MCF 10A (cell line): ENCODE measurements at regions of chr5 and their contacts with region 1.

Region 1: DNA sequence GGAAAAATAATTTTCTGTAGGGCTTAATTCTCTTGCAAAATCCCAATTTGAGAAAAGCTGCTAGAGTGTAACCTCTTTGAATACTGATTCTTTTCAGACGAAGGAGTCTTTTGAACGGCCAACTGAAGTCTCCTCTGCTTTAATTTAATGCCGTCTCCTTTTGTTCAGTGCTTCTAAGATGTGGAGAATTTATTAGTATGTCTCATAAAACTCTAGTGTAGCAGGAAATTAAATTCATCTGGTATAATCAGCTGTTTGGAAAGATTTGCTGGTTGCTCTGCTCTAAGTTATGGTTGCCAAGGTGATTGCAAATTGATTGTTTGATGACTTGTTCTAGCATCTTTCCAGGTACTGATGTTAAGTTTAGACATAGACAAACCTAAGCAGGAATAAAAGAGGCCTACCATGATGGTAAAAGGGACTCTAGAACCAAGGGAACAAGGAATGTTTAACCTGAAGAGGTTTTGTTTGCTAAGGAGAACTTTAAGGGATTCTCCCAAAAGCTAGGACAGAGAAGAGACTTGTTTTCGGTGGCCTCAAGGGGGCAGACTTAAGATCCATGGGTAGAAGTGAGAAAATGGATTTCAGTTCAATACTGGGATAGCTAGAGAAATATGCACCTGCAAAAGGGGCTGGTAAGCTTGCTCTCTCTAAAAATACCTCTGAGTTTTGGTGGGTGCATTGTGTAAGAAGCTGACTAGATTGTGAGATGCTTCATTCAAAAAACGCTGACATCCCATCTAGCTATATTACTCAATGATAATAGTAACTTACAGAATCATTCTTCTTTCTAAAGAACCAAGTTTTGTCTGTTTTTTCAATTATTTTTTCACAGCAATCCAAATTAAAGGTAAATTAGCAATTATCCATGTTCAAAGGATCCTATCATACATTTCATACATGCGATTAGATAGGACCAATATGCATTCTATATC is 5.7 kb upstream of the ADRB2 start:
- DNase-seq: peak; percentile 63
- H3K4me3 Mint-ChIP-seq: no peak overlapping the region
- H3K27ac Mint-ChIP-seq: no peak overlapping the region
- H3K4me1 Mint-ChIP-seq: peaks cover 5% of the 10 kb centered on the region
- H3K27me3 Mint-ChIP-seq: no peaks in the 10 kb centered on the region
- CTCF ChIP-seq: peak; percentile 84

Region 2: GRCh38 chr5:148179234-148179824 is 641.4 kb before region 1 on chr5:
- CTCF ChIA-PET with region 1: no interaction called
- POLR2A ChIA-PET with region 1: no interaction called
- intact Hi-C with region 1: no loop called
- DNase-seq: peak; percentile 84
- H3K4me3 Mint-ChIP-seq: no peak overlapping the region
- H3K27ac Mint-ChIP-seq: no peak overlapping the region
- H3K4me1 Mint-ChIP-seq: no peaks in the 10 kb centered on the region
- H3K27me3 Mint-ChIP-seq: peaks cover 7% of the 10 kb centered on the region
- CTCF ChIP-seq: peak; percentile 94

Region 3: DNA sequence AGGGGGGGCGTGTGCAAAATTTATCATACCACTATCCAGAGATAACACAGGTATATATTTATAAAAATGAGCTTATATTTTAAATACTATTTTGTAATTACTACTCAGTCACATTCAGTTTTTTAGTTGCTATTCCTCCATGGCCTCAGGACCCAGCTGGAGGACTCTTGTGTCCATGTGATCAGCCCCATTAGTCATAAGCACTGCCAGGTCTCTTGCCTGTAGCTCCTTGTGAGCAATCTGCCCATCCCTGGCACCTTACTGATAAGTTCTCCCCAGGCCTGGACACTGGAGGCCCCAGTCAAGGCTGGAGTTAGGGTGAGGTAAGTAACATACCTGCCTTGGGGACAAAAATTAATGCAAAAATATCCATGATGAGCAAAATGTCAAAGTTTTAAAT is 23.8 kb before region 1 on chr5:
- CTCF ChIA-PET with region 1: interaction called, 12 read pairs
- POLR2A ChIA-PET with region 1: interaction called, 4 read pairs
- intact Hi-C with region 1: no loop called
- DNase-seq: peak; percentile 55
- H3K4me3 Mint-ChIP-seq: no peak overlapping the region
- H3K27ac Mint-ChIP-seq: no peak overlapping the region
- H3K4me1 Mint-ChIP-seq: peaks cover 28% of the 10 kb centered on the region
- H3K27me3 Mint-ChIP-seq: no peaks in the 10 kb centered on the region
- CTCF ChIP-seq: no peak

Region 4: DNA sequence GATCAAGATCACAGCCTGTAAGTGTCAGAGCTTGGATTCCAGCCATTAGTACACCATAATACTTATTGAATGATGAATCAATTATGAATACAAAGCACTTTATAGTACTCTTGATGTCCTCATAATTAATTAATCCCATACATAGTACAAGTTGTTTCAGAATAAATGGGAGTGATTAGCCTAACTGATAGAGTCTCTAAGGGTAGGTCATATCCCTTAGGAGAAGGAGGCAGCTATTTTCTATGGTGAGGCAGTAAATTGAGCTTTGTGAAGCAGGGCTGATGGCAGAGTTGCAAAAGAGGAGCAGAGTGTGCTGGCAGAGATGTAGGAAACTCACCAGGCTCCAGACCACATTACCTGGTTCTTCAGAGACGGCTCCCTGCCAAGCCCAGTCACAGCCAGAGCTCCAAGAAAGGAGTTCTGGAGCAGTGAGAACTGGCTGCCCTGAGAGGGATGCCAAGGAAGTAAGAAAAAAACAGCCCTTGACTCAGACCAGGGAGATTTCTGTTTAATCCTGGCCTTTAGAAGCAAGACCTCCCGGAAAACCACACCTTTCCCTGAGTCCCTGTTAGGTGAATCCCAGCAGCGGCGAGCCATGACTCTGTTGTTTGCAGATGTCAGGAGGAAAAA is 129.2 kb after region 1 on chr5:
- CTCF ChIA-PET with region 1: interaction called, 20 read pairs
- POLR2A ChIA-PET with region 1: interaction called, 70 read pairs
- intact Hi-C with region 1: no loop called
- DNase-seq: peak; percentile 97
- H3K4me3 Mint-ChIP-seq: no peak overlapping the region
- H3K27ac Mint-ChIP-seq: peak overlapping the region; percentile 92
- H3K4me1 Mint-ChIP-seq: peaks cover 17% of the 10 kb centered on the region
- H3K27me3 Mint-ChIP-seq: no peaks in the 10 kb centered on the region
- CTCF ChIP-seq: no peak

Region 5: DNA sequence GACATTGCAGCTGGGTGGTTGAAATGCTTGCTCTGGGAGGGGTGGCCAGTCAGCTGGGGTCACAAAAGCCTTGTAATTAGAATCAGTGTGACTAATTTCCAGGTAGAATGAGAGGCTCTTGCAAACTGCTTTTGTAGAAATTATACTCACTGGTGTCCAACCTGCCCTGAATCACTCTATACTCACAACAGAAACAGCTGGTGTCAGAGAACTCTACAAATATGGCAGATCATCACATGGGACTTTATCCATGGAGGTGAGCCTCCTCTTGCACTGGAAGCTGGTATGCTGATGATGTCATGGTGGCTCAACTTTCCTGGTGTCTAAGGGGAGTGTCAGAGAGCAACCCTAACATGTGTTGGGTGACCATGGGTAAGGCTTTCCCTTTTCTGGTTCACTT is 170.9 kb after region 1 on chr5:
- CTCF ChIA-PET with region 1: interaction called, 150 read pairs
- POLR2A ChIA-PET with region 1: interaction called, 255 read pairs
- intact Hi-C with region 1: no loop called
- DNase-seq: no peak
- H3K4me3 Mint-ChIP-seq: no peak overlapping the region
- H3K27ac Mint-ChIP-seq: no peak overlapping the region
- H3K4me1 Mint-ChIP-seq: peaks cover 42% of the 10 kb centered on the region
- H3K27me3 Mint-ChIP-seq: no peaks in the 10 kb centered on the region
- CTCF ChIP-seq: no peak

Region 6: GRCh38 chr5:149268928-149269557 is 448.3 kb after region 1 on chr5:
- CTCF ChIA-PET with region 1: no interaction called
- POLR2A ChIA-PET with region 1: no interaction called
- intact Hi-C with region 1: loop called (anchors 5 kb)
- DNase-seq: peak; percentile 84
- H3K4me3 Mint-ChIP-seq: no peak overlapping the region
- H3K27ac Mint-ChIP-seq: no peak overlapping the region
- H3K4me1 Mint-ChIP-seq: peaks cover 14% of the 10 kb centered on the region
- H3K27me3 Mint-ChIP-seq: no peaks in the 10 kb centered on the region
- CTCF ChIP-seq: peak; percentile 91